Activated CD8-positive, alpha-beta memory T cell treated with anti-CD3 and anti-CD28 coated beads, Interleukin-2, amount 10 ng/mL, durations not matched to agents 7 days and 5 days (primary cell): ENCODE measurements at regions of chr11 and their contacts with region 1.

Region 1: DNA sequence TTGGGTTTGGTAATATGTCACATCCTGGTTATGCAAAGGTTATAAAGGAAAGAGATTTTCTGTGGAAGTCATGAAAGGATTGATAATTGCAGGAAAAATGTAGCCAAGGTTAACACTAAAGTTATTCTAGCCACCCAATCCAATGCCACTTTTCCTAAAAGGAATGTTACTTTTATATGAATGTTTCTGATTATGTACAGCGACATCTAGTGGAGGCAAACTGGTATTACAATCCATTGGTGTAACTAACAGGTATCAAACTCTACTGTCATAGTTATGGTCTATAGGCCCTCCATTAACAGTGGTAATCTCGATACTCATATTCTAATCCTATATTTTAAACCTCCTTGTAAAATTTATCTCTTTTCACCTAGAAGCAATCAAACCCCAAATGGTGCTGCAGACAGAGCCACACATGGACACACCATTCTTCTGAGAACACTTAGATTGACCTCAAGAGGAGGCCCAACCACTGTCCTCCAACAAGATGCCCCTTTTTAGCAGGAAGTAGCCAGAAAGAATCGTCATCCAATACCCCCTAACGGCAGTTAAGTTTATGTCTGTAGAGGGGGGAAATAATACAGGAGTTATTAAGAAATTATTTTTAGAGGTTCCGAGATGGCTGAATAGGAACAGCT is 74.9 kb upstream of the RAG2 start:
- DNase-seq: no peak
- ATAC-seq: no peak
- H3K4me3 Mint-ChIP-seq: no peak overlapping the region
- H3K27ac Mint-ChIP-seq: no peak overlapping the region
- H3K4me1 Mint-ChIP-seq: no peaks in the 10 kb centered on the region
- H3K27me3 Mint-ChIP-seq: no peaks in the 10 kb centered on the region

Region 2: GRCh38 chr11:36278531-36279282 is 394.2 kb before region 1 on chr11:
- CTCF ChIA-PET with region 1: no interaction called
- DNase-seq: no peak
- ATAC-seq: no peak
- H3K4me3 Mint-ChIP-seq: no peak overlapping the region
- H3K27ac Mint-ChIP-seq: no peak overlapping the region
- H3K4me1 Mint-ChIP-seq: no peaks in the 10 kb centered on the region
- H3K27me3 Mint-ChIP-seq: no peaks in the 10 kb centered on the region

Region 3: DNA sequence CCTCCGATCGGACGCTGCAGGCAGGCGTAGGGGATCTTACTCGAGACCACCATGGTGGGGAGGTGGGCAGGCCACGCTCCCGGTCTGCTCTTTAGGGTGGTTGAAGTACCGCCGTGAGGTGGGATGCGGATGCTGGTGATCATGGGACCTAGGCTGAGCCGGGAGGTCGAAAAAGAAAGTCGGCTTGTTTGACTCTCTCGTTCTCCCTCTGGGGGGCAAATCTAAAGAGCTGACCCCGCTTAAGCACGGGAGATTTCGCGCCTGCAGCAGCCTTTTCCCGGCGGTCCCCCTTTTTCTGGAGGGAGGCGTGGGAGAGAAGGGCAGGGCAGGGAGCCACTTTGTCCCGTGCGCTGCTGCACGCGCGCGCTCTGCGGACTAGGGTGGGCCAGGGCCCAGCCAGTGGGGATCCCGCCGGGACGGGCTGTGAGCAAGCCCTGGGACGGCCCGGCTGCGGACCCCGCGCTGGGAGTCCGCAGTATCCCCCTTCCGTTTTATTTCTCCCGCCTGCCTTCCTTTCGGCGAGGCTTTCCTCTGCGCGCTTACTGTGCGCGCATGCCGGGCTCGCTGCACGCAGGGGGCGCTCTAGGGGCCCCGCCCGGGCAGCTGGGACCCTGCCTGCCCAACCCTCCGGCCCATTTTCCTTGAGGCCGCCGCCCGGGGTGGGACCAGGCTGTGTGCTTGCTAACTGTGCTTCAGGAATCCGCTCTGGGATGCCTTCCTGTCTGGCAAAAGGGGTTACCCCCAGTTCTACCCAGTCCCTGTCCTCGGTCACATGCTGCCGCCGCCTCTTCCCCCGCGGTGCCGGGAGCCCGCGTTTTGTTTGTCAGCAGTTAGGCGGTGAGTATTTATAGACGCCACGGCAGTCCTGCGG is 295.8 kb before region 1 on chr11:
- CTCF ChIA-PET with region 1: no interaction called
- DNase-seq: peak; percentile 67
- ATAC-seq: peak; percentile 74
- H3K4me3 Mint-ChIP-seq: peak overlapping the region; percentile 90
- H3K27ac Mint-ChIP-seq: peak overlapping the region; percentile 74
- H3K4me1 Mint-ChIP-seq: peaks cover 40% of the 10 kb centered on the region
- H3K27me3 Mint-ChIP-seq: peaks cover 80% of the 10 kb centered on the region

Region 4: GRCh38 chr11:36564376-36565030 is 108.4 kb before region 1 on chr11:
- CTCF ChIA-PET with region 1: interaction called, 18 read pairs
- DNase-seq: peak; percentile 61
- ATAC-seq: peak; percentile 68
- H3K4me3 Mint-ChIP-seq: peak overlapping the region; percentile 22
- H3K27ac Mint-ChIP-seq: no peak overlapping the region
- H3K4me1 Mint-ChIP-seq: peaks cover 9% of the 10 kb centered on the region
- H3K27me3 Mint-ChIP-seq: peaks cover 40% of the 10 kb centered on the region

Region 5: GRCh38 chr11:36684840-36685801 is 12.2 kb after region 1 on chr11:
- CTCF ChIA-PET with region 1: no interaction called
- DNase-seq: no peak
- ATAC-seq: no peak
- H3K4me3 Mint-ChIP-seq: no peak overlapping the region
- H3K27ac Mint-ChIP-seq: no peak overlapping the region
- H3K4me1 Mint-ChIP-seq: no peaks in the 10 kb centered on the region
- H3K27me3 Mint-ChIP-seq: peaks cover 67% of the 10 kb centered on the region